Heart left ventricle (tissue), 16 donors: ENCODE measurements at regions of chr18 and their contacts with region 1.

Region 1: DNA sequence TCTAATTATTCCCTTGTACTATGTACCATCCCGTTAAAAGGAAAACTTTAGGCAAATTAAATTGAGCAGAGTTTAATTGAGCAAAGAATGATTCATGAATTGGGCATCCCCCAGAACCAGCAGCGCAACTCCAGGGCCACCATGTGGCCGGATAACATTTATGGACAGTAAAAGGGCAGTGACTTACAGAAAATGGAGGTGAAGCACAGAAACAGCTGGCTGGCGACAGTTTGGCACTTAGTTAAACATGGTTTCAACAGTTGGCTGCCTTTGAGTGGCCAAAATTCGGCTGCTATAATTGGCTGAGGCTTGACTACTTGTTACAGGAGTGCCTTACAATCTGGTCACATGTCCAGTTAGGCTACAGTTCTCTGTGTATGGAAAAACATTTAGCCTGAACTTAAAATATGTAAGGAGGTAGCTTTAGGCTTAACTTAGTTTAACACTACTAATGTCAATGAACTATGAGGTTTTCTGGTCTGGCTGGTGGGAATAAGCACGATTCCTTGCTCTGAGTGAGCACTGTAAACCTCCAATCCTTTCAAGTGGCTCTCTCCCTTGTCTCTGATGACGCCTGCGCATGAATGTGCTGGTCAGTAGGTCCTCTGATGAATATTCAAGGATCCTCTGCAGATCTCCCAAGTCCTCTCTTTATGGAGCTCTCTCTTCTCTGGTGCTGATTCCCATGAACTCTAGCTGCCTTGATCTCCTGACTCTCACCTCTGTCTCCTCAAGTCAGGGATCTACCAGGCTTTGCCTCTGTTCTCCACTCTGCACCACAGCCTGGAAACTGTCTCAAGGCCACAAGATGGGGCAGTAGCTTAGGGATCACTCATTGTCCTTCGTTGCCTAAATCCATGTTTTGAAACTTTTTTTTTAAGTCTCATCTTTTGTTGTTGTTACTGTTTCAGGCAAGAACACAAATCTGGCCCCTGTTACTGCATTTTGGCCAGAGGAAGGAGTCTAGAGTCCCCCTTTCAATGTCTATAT is 24.4 kb upstream of the RAB31 start:
- DNase-seq: no peak
- ATAC-seq: peak; percentile 50 to 60 (median 54)
- H3K4me3 ChIP-seq: peak overlapping the region in 1 of 12 donors; percentile 13
- H3K27ac ChIP-seq: peak overlapping the region in 8 of 12 donors; percentile 52 to 79 (median 72)
- H3K4me1 ChIP-seq: peaks cover 0 to 26% (median 11%) of the 10 kb centered on the region in 12 donors
- H3K27me3 ChIP-seq: no peaks in the 10 kb centered on the region
- CTCF ChIP-seq: peak in 10 of 12 donors; percentile 12 to 59 (median 40)
- POLR2A ChIP-seq: no peak

Region 2: GRCh38 chr18:9570255-9570654 is 113.4 kb before region 1 on chr18:
- intact Hi-C with region 1: loop called in 6 of 10 experiments (anchors 5 to 10 kb)
- DNase-seq: no peak
- ATAC-seq: no peak
- H3K4me3 ChIP-seq: no peak overlapping the region
- H3K27ac ChIP-seq: no peak overlapping the region
- H3K4me1 ChIP-seq: peaks cover 0 to 9% (median 4%) of the 10 kb centered on the region in 12 donors
- H3K27me3 ChIP-seq: no peaks in the 10 kb centered on the region
- CTCF ChIP-seq: no peak
- POLR2A ChIP-seq: no peak

Region 3: GRCh38 chr18:9771261-9771976 is 87.7 kb after region 1 on chr18:
- intact Hi-C with region 1: loop called in 6 of 10 experiments (anchors 2 to 10 kb)
- DNase-seq: peak; percentile 84 to 92 (median 87)
- ATAC-seq: peak; percentile 87 to 98 (median 94)
- H3K4me3 ChIP-seq: peak overlapping the region in 2 of 12 donors; percentile 8 to 12
- H3K27ac ChIP-seq: peak overlapping the region in 7 of 12 donors; percentile 1 to 86 (median 14)
- H3K4me1 ChIP-seq: peaks cover 0 to 75% (median 9%) of the 10 kb centered on the region in 12 donors
- H3K27me3 ChIP-seq: no peaks in the 10 kb centered on the region
- CTCF ChIP-seq: peak; percentile 95 to 99 (median 98)
- POLR2A ChIP-seq: no peak